ENCODE measurements at regions of chr3 and their contacts with region 1.

Region 1: DNA sequence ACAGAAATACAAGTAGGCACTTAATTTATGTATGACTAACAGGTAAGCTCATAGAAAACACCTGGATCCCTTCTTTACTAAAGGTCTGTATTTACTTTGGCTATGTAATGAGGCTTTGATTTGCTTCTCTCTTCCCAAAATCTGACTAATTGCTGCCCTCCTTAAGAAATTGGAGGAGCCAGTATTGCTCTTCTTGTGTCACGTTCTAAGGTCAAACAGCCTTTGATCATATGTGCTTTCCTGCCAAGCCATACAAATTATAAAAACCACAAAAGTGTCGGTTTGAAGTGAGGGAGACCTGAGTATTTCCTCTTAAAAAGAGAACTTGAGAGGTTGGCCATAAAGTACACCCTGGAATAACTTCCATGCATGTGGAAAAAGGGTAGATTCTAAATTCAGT is 112.1 kb upstream of the MB21D2 start:
- DNase-seq: no peak
- ATAC-seq: no peak
- H3K4me3 ChIP-seq: no peak overlapping the region
- H3K27ac ChIP-seq: no peak overlapping the region
- H3K4me1 ChIP-seq: no peaks in the 10 kb centered on the region
- CTCF ChIP-seq: no peak
- EP300 ChIP-seq: no peak
- POLR2A ChIP-seq: no peak
- RAD21 ChIP-seq: no peak

Region 2: GRCh38 chr3:192844836-192845525 is 184.8 kb before region 1 on chr3:
- CTCF ChIA-PET with region 1: no interaction called
- POLR2A ChIA-PET with region 1: no interaction called
- DNase-seq: no peak
- ATAC-seq: no peak
- H3K4me3 ChIP-seq: no peak overlapping the region
- H3K27ac ChIP-seq: no peak overlapping the region
- H3K4me1 ChIP-seq: peaks cover 22% of the 10 kb centered on the region
- CTCF ChIP-seq: no peak
- EP300 ChIP-seq: no peak
- POLR2A ChIP-seq: no peak
- RAD21 ChIP-seq: no peak

Region 3: GRCh38 chr3:193040836-193041672 is 11.3 kb after region 1 on chr3:
- CTCF ChIA-PET with region 1: interaction called, 11 read pairs
- POLR2A ChIA-PET with region 1: no interaction called
- DNase-seq: peak; percentile 15 to 55
- ATAC-seq: peak; percentile 34 to 81; a peak in 4 of 6 replicates
- H3K4me3 ChIP-seq: no peak overlapping the region
- H3K27ac ChIP-seq: no peak overlapping the region; a peak in 1 of 6 replicates
- H3K4me1 ChIP-seq: 0 out of 3 replicates have a peak, but pooled peaks cover 3% of the 10 kb centered on the region
- CTCF ChIP-seq: peak; percentile 71
- EP300 ChIP-seq: no peak
- POLR2A ChIP-seq: no peak
- RAD21 ChIP-seq: peak; percentile 85

Measured in A549 (cell line).